PC-3 (cell line): ENCODE measurements at regions of chr14 and their contacts with region 1.

Region 1: DNA sequence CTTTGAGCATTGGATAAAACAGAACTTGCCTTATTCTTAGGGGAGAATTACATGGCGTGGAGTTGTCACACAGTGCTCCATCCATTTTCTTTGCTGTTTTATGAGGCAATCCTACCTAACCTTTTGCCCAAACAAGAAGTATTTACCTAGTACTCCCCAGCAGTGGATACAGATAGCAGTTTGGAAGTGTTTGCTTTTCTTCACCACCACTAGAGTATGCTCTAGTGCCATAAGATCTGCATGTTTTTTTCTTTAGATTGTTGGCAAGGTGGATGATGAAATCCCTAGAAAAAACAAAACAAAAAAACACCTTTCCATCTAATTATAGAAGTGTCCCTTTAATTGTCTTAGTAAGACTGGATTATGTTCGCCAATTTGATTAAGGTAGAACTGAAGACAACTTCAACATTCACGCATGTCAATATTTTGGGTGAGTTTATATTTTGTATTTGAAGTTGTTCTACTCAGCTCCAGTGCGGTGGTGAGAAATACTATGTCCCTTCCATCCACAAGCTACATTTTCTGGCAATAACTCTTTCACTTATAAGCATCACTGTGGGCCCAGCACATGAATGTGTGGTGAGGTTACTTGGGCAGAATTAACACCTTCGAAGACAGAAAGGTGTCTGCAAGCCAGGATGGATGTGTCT is 23.6 kb upstream of the TMEM260 start:
- DNase-seq: peak; percentile 86
- ATAC-seq: peak; percentile 84
- H3K4me3 ChIP-seq: no peak overlapping the region
- H3K27ac ChIP-seq: no peak overlapping the region
- H3K4me1 ChIP-seq: no peaks in the 10 kb centered on the region; the same call in 1 of the 2 replicates
- H3K27me3 ChIP-seq: peaks cover 76% of the 10 kb centered on the region
- CTCF ChIP-seq: peak; percentile 99

Region 2: DNA sequence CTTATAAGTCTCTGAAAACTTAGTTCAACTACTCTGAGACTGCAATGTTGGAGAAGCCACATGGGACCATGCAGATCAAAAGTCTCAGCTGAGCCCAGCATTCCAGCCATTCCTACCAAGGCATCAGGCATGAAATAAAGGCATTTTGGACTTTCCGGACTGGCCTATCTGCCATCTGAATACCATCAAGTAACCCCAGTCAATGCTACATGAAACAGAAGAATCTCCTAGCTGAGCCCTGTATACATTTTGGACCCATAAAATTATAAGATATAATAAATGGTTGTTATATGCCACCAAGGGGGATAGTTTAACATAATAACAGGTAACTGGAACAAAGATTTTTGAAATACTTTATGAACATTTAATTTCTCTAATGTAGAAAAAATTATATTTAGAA is 14.2 kb after region 1 on chr14:
- CTCF ChIA-PET with region 1: no interaction called
- POLR2A ChIA-PET with region 1: interaction called, 13 read pairs
- intact Hi-C with region 1: no loop called
- DNase-seq: no peak
- ATAC-seq: no peak
- H3K4me3 ChIP-seq: no peak overlapping the region
- H3K27ac ChIP-seq: no peak overlapping the region
- H3K4me1 ChIP-seq: no peaks in the 10 kb centered on the region
- H3K27me3 ChIP-seq: peaks cover 49% of the 10 kb centered on the region
- CTCF ChIP-seq: no peak

Region 3: GRCh38 chr14:56874375-56874774 is 318.3 kb after region 1 on chr14:
- CTCF ChIA-PET with region 1: no interaction called
- POLR2A ChIA-PET with region 1: no interaction called
- intact Hi-C with region 1: loop called (anchors 1 kb)
- DNase-seq: peak; percentile 70
- ATAC-seq: peak; percentile 86
- H3K4me3 ChIP-seq: no peak overlapping the region
- H3K27ac ChIP-seq: no peak overlapping the region
- H3K4me1 ChIP-seq: no peaks in the 10 kb centered on the region
- H3K27me3 ChIP-seq: peaks cover 44% of the 10 kb centered on the region
- CTCF ChIP-seq: peak; percentile 93

Region 4: DNA sequence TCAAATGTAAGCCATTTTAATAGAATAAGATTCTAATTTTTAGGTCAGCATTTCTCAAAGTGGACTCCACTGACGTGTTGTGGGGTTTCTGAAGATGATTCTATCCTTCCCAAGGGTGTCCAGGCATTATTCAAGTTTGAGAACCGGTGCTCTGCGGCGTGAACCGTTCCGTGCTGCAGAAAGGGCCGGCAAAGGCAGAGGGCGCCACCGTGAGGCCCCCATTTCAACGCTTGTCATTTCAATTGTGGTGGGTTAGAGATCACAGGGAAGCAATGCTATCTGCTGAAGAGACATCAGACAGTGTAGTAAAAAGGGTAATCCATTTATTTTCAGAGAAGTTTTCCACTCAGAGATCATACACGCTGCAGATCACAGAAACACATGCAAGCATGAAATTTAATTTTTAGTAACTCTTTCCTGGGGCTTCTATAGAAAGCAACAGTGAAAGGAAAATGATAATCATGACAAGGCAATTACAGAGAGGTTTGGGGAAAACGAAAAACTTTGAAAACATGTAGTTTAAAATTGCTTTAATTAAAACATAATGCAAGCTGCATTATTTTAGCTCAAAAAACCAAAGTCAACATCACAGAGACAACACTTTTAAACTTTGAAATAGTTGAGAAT is 511.0 kb after region 1 on chr14:
- CTCF ChIA-PET with region 1: no interaction called
- POLR2A ChIA-PET with region 1: no interaction called
- intact Hi-C with region 1: loop called (anchors 1 kb)
- DNase-seq: peak; percentile 79
- ATAC-seq: peak; percentile 94
- H3K4me3 ChIP-seq: no peak overlapping the region
- H3K27ac ChIP-seq: no peak overlapping the region
- H3K4me1 ChIP-seq: no peaks in the 10 kb centered on the region
- H3K27me3 ChIP-seq: peaks cover 88% of the 10 kb centered on the region
- CTCF ChIP-seq: peak; percentile 99

Region 5: DNA sequence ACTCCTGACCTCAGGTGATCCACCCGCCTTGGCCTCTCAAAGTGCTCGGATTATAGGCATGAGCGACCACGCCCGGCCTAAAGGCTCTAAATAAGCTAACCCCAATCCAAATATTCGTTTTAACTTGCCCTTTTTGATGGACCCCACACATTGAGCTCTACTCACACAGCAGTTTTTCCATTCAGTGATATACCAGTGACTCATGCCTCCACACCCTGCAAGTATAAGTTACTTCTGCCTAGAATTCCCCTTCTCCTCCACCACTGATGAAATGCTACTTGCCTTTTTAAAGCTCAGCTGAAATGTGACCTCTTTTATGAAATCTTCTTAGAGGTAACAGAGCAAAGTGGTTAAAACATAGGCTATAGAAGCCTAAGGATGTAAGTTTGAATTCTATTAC is 643.9 kb after region 1 on chr14:
- CTCF ChIA-PET with region 1: no interaction called
- POLR2A ChIA-PET with region 1: no interaction called
- intact Hi-C with region 1: loop called (anchors 2 kb)
- DNase-seq: peak; percentile 56
- ATAC-seq: peak; percentile 73
- H3K4me3 ChIP-seq: no peak overlapping the region
- H3K27ac ChIP-seq: no peak overlapping the region
- H3K4me1 ChIP-seq: peaks cover 5% of the 10 kb centered on the region; the same call in 1 of the 2 replicates
- H3K27me3 ChIP-seq: no peaks in the 10 kb centered on the region
- CTCF ChIP-seq: no peak

Region 6: DNA sequence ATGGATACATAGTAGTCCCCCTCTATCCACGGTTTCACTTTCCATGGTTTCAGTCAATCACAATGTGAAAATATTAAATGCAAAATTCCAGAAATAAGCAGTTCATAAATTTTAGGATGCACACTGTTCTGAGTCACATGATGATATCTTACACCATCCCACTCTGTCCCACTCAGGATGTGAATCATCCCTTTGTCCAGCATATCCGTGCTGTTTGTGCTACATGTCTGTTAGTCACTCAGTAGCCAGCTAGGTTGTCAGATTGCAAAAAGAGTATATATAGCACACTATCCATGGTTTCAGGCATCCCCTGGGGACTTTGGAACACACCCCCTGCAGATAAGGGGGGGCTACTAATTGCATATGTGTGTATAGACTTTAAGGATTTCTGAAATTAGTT is 826.2 kb after region 1 on chr14:
- CTCF ChIA-PET with region 1: no interaction called
- POLR2A ChIA-PET with region 1: no interaction called
- intact Hi-C with region 1: loop called (anchors 1 kb)
- DNase-seq: peak; percentile 99
- ATAC-seq: peak; percentile 99
- H3K4me3 ChIP-seq: no peak overlapping the region
- H3K27ac ChIP-seq: peak overlapping the region; percentile 45
- H3K4me1 ChIP-seq: peaks cover 33% of the 10 kb centered on the region
- H3K27me3 ChIP-seq: no peaks in the 10 kb centered on the region
- CTCF ChIP-seq: no peak